HepG2 (cell line): ENCODE measurements at regions of chr2 and their contacts with region 1.

Region 1: GRCh38 chr2:18560031-18560796 is at the start of gene RDH14:
- DNase-seq: peak; percentile 97
- ATAC-seq: peak; percentile 94
- H3K4me3 ChIP-seq: peak within 1 kb of the TSS; percentile 78 to 84 (median 83)
- H3K27ac ChIP-seq: peak within 1 kb of the TSS; percentile 87
- H3K4me1 ChIP-seq: peaks cover 27% of the 10 kb centered on the region
- H3K27me3 ChIP-seq: no peaks in the 10 kb centered on the region
- CTCF ChIP-seq: peak; percentile 35
- EP300 ChIP-seq: 0 out of 4 replicates have a peak, but pooled peaks of 1 of the 2 experiments have one; percentile 10
- POLR2A ChIP-seq: peak; percentile 70 to 74; a peak in 3 of 4 replicates
- RAD21 ChIP-seq: peak; percentile 79
- total RNA-seq, gene RDH14: 37.4 and 39.9 TPM in 2 replicates

Region 2: GRCh38 chr2:18136881-18137475 is 423.2 kb before region 1 on chr2:
- CTCF ChIA-PET with region 1: no interaction called
- POLR2A ChIA-PET with region 1: no interaction called
- in situ Hi-C with region 1: no loop called
- intact Hi-C with region 1: no loop called
- DNase-seq: no peak
- ATAC-seq: no peak
- H3K4me3 ChIP-seq: no peak overlapping the region
- H3K27ac ChIP-seq: no peak overlapping the region
- H3K4me1 ChIP-seq: no peaks in the 10 kb centered on the region
- H3K27me3 ChIP-seq: no peaks in the 10 kb centered on the region
- CTCF ChIP-seq: no peak
- EP300 ChIP-seq: no peak
- POLR2A ChIP-seq: no peak
- RAD21 ChIP-seq: no peak

Region 3: GRCh38 chr2:18546567-18546966 is 13.6 kb before region 1 on chr2:
- CTCF ChIA-PET with region 1: no interaction called
- POLR2A ChIA-PET with region 1: interaction called, 14 read pairs
- in situ Hi-C with region 1: no loop called
- intact Hi-C with region 1: no loop called
- DNase-seq: peak; percentile 25
- ATAC-seq: peak; percentile 61
- H3K4me3 ChIP-seq: no peak overlapping the region
- H3K27ac ChIP-seq: no peak overlapping the region
- H3K4me1 ChIP-seq: peaks cover 11% of the 10 kb centered on the region; the same call in 1 of the 2 replicates
- H3K27me3 ChIP-seq: no peaks in the 10 kb centered on the region
- CTCF ChIP-seq: no peak
- EP300 ChIP-seq: no peak
- POLR2A ChIP-seq: no peak
- RAD21 ChIP-seq: no peak

Region 4: DNA sequence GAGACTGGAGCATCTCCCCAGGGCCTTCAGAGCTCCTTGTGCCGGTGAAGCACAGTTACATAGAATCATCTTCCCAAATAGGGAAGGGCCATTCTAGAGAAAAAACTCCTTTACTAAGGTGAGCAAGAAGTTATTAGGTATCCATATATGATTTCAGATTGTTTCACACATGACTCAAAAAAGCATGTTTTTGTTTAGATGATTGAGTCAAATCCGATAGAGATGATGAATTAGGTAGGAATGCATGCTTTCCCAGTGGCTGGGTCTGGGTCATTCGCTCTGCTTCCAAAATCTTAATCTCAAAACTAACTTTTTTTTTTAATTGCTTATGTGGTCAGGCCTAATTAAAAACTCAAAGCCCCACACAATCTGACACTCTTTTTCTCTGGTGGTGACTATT is 25.3 kb after region 1 on chr2:
- CTCF ChIA-PET with region 1: no interaction called
- POLR2A ChIA-PET with region 1: no interaction called
- in situ Hi-C with region 1: no loop called
- intact Hi-C with region 1: no loop called
- DNase-seq: no peak
- ATAC-seq: no peak
- H3K4me3 ChIP-seq: no peak overlapping the region
- H3K27ac ChIP-seq: no peak overlapping the region
- H3K4me1 ChIP-seq: no peaks in the 10 kb centered on the region
- H3K27me3 ChIP-seq: no peaks in the 10 kb centered on the region
- CTCF ChIP-seq: no peak
- EP300 ChIP-seq: no peak
- POLR2A ChIP-seq: no peak
- RAD21 ChIP-seq: no peak